Naive thymus-derived CD4-positive, alpha-beta T cell (primary cell): ENCODE measurements at regions of chr20 and their contacts with region 1.

Region 1: GRCh38 chr20:44080646-44081267 is 106.2 kb downstream of the JPH2 start:
- DNase-seq: peak; percentile 55 to 85 (median 79)
- ATAC-seq: peak; percentile 100
- H3K4me3 ChIP-seq: no peak overlapping the region
- H3K4me3 Mint-ChIP-seq: peak overlapping the region in 8 of 10 donors; percentile 0 to 48 (median 29)
- H3K27ac ChIP-seq: no peak overlapping the region
- H3K27ac Mint-ChIP-seq: peak overlapping the region in 8 of 9 donors; percentile 66 to 96 (median 86)
- H3K4me1 ChIP-seq: peaks cover 0 to 18% of the 10 kb centered on the region in 2 donors
- H3K4me1 Mint-ChIP-seq: peaks cover 13 to 38% (median 25%) of the 10 kb centered on the region in 7 donors
- H3K27me3 ChIP-seq: no peaks in the 10 kb centered on the region
- H3K27me3 Mint-ChIP-seq: peaks cover 0 to 4% (median 0%) of the 10 kb centered on the region in 5 donors

Region 2: GRCh38 chr20:43448748-43449535 is 631.8 kb before region 1 on chr20:
- CTCF ChIA-PET with region 1: interaction called, 4 read pairs
- POLR2A ChIA-PET with region 1: no interaction called
- intact Hi-C with region 1: loop called in 1 of 2 experiments (anchors 1 kb)
- DNase-seq: peak in 6 of 9 donors; percentile 28 to 47 (median 38)
- ATAC-seq: peak; percentile 70
- H3K4me3 ChIP-seq: no peak overlapping the region
- H3K4me3 Mint-ChIP-seq: peak overlapping the region in 1 of 10 donors; percentile 21
- H3K27ac ChIP-seq: no peak overlapping the region
- H3K27ac Mint-ChIP-seq: no peak overlapping the region
- H3K4me1 ChIP-seq: no peaks in the 10 kb centered on the region
- H3K4me1 Mint-ChIP-seq: peaks cover 0 to 8% (median 4%) of the 10 kb centered on the region in 7 donors
- H3K27me3 ChIP-seq: no peaks in the 10 kb centered on the region
- H3K27me3 Mint-ChIP-seq: peaks cover 8 to 35% (median 22%) of the 10 kb centered on the region in 5 donors

Region 3: DNA sequence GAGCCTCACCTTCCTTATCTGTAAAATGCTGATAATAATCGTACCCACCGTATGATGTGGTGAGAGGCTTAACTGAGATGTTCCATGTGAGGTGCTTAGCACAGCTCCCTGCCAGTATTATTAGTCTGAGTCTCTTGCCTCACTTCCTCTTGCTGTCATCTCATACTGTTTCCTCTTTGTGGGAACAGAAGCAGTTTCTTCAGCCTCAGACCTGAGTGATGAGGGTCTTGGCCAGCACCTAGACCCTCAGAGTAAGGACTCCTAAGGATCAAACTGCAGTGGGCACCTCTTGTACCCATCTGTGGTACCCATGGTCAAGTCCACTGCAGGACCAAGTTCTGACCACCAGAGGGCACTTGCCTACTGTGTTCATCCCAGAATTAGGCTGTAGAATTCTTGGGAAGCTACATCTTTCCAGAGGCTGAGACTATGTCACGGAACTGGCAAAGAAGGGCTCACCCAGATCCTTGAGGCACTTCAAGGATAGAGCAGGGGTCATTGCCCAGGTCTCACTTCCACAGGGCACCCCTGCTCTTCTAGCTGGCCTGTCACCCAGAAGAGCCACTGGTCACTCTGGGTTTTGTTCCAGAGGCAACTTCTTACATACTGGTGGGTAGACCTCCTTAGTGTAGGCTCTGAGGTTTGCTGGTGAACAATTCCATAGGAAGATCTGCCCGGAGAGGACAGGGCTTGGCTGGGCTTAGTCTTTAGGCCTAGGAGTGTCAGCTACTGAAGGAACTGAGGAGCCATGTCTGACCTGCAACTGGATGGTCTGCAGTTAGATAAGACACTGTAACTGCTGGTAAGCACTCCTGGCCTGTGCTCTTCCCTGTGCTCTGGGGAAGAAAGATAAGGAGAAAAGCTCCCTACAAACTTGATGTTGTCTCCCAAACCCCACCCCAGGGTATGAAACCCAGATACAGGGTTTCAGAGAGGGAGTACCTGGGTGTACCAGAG is 542.6 kb before region 1 on chr20:
- CTCF ChIA-PET with region 1: interaction called, 3 read pairs
- POLR2A ChIA-PET with region 1: no interaction called
- intact Hi-C with region 1: loop called (anchors 1 kb)
- DNase-seq: peak in 5 of 9 donors; percentile 19 to 45 (median 31)
- ATAC-seq: peak; percentile 57
- H3K4me3 ChIP-seq: no peak overlapping the region
- H3K4me3 Mint-ChIP-seq: no peak overlapping the region
- H3K27ac ChIP-seq: no peak overlapping the region
- H3K27ac Mint-ChIP-seq: peak overlapping the region in 2 of 9 donors; percentile 45 to 57
- H3K4me1 ChIP-seq: no peaks in the 10 kb centered on the region
- H3K4me1 Mint-ChIP-seq: peaks cover 0 to 4% (median 0%) of the 10 kb centered on the region in 7 donors
- H3K27me3 ChIP-seq: no peaks in the 10 kb centered on the region
- H3K27me3 Mint-ChIP-seq: no peaks in the 10 kb centered on the region

Region 4: DNA sequence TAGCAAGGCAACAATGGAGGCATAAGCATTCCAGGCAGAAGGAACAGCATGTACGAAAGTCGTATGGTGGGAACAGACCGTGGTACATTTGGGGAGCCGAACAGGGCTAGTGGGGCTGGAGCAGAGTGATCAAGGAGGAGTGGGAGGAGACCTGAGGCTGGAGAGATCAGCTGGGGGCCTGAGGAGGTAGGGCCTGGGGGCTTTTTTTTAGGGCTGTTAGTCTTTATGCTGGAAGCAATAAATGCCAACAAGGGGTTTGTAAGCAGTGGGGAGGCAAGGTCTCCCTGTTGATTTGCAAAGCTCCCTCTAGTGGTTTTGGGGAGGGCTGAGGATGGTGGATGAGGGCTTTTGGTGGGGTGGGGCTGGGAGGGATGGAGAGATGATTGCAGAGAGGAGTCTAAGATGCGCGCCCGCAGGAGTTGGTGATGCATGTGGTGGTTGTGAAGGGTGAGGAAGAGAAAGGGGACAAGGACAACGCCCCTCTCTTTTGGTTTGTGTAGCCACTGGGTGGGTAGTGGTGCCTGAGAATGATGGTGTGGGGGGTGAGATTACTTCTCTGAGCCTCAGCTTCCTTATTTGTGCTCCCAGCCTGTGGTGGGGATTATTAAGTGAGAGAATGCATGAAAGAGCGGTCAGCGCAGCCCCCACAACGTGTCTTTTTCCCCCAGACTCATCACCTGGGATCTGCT is 240.2 kb before region 1 on chr20:
- CTCF ChIA-PET with region 1: interaction called, 5 read pairs
- POLR2A ChIA-PET with region 1: no interaction called
- intact Hi-C with region 1: loop called in 1 of 2 experiments (anchors 5 kb)
- DNase-seq: peak in 6 of 9 donors; percentile 17 to 38 (median 23)
- ATAC-seq: peak; percentile 56
- H3K4me3 ChIP-seq: no peak overlapping the region
- H3K4me3 Mint-ChIP-seq: no peak overlapping the region
- H3K27ac ChIP-seq: no peak overlapping the region
- H3K27ac Mint-ChIP-seq: peak overlapping the region in 2 of 9 donors; percentile 67 to 74
- H3K4me1 ChIP-seq: peaks cover 0 to 11% of the 10 kb centered on the region in 2 donors
- H3K4me1 Mint-ChIP-seq: peaks cover 10 to 55% (median 18%) of the 10 kb centered on the region in 7 donors
- H3K27me3 ChIP-seq: no peaks in the 10 kb centered on the region
- H3K27me3 Mint-ChIP-seq: peaks cover 0 to 13% (median 0%) of the 10 kb centered on the region in 5 donors

Region 5: GRCh38 chr20:43963872-43964791 is 116.6 kb before region 1 on chr20:
- CTCF ChIA-PET with region 1: no interaction called
- POLR2A ChIA-PET with region 1: no interaction called
- intact Hi-C with region 1: loop called in 1 of 2 experiments (anchors 1 kb)
- DNase-seq: peak in 7 of 9 donors; percentile 71 to 86 (median 83)
- ATAC-seq: peak; percentile 94
- H3K4me3 ChIP-seq: no peak overlapping the region
- H3K4me3 Mint-ChIP-seq: peak overlapping the region; percentile 47 to 80 (median 72)
- H3K27ac ChIP-seq: peak overlapping the region; percentile 18
- H3K27ac Mint-ChIP-seq: peak overlapping the region in 4 of 9 donors; percentile 16 to 90 (median 59)
- H3K4me1 ChIP-seq: peaks cover 43 to 65% of the 10 kb centered on the region in 2 donors
- H3K4me1 Mint-ChIP-seq: peaks cover 25 to 52% (median 43%) of the 10 kb centered on the region in 7 donors
- H3K27me3 ChIP-seq: no peaks in the 10 kb centered on the region
- H3K27me3 Mint-ChIP-seq: peaks cover 0 to 18% (median 0%) of the 10 kb centered on the region in 5 donors

Region 6: GRCh38 chr20:44056010-44056698 is 24.6 kb before region 1 on chr20:
- CTCF ChIA-PET with region 1: interaction called, 159 read pairs
- POLR2A ChIA-PET with region 1: interaction called, 12 read pairs
- intact Hi-C with region 1: loop called (anchors 1 kb)
- DNase-seq: peak in 8 of 9 donors; percentile 41 to 83 (median 74)
- ATAC-seq: peak; percentile 96
- H3K4me3 ChIP-seq: no peak overlapping the region
- H3K4me3 Mint-ChIP-seq: no peak overlapping the region
- H3K27ac ChIP-seq: no peak overlapping the region
- H3K27ac Mint-ChIP-seq: peak overlapping the region in 7 of 9 donors; percentile 6 to 85 (median 33)
- H3K4me1 ChIP-seq: peaks cover 0 to 9% of the 10 kb centered on the region in 2 donors
- H3K4me1 Mint-ChIP-seq: peaks cover 10 to 49% (median 30%) of the 10 kb centered on the region in 7 donors
- H3K27me3 ChIP-seq: no peaks in the 10 kb centered on the region
- H3K27me3 Mint-ChIP-seq: peaks cover 0 to 19% (median 0%) of the 10 kb centered on the region in 5 donors